Common myeloid progenitor, CD34-positive (primary cell): ENCODE measurements at regions of chr10 and their contacts with region 1.

Region 1: DNA sequence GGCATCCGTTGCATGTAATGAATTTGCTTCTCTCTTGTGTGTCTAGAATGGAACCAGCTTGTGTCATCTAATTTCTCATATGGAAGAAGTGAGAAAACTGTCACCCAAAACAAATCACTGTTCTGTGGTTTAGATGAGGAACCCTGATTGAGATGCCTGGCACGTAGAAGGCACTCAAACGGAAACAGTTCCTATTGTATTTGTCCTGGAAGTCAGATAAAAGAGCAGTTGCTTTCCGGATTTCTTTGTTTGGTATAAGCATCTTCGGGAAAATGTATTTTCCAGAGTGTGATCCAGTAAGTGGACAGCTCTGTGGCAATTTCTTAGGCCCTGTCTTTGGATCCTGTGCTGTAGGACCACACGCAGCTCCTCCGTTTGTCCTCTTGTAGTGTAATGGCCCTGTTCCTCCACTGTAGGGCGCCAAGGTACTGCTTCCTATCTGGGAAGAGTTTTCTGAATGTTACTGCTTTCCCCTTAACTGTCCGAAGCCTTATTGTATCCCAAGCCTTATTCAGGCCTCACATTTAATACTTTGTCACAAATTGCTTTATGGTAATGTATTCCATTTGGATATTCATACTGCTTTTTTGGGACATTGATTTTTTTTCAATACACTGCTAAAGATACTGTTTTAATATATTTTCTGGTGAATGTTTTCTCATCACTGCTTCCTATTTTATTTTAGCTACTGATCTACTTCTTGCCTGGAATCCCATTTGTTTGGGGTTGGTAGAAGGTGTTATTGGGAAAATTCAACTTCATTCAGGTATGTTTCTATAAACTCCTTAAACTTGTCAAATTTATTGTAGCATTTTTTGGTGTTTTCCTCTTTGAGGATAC is 24.8 kb downstream of the INPP5F start:
- DNase-seq: peak; percentile 68 to 80 (median 76)
- H3K4me3 ChIP-seq: no peak overlapping the region
- H3K27ac ChIP-seq: no peak overlapping the region
- H3K4me1 ChIP-seq: peaks cover 0 to 7% (median 1%) of the 10 kb centered on the region in 4 experiments
- H3K27me3 ChIP-seq: no peaks in the 10 kb centered on the region

Region 2: GRCh38 chr10:119737827-119738226 is 12.8 kb before region 1 on chr10:
- CTCF ChIA-PET with region 1: interaction called, 25 read pairs
- POLR2A ChIA-PET with region 1: no interaction called
- DNase-seq: peak; percentile 34 to 75 (median 64)
- H3K4me3 ChIP-seq: peak overlapping the region in 1 of 7 experiments; percentile 33
- H3K27ac ChIP-seq: no peak overlapping the region
- H3K4me1 ChIP-seq: peaks cover 0 to 23% (median 8%) of the 10 kb centered on the region in 4 experiments
- H3K27me3 ChIP-seq: no peaks in the 10 kb centered on the region

Region 3: GRCh38 chr10:119769886-119770285 is 19.3 kb after region 1 on chr10:
- CTCF ChIA-PET with region 1: interaction called, 32 read pairs
- POLR2A ChIA-PET with region 1: no interaction called
- DNase-seq: no peak
- H3K4me3 ChIP-seq: no peak overlapping the region
- H3K27ac ChIP-seq: no peak overlapping the region
- H3K4me1 ChIP-seq: peaks cover 7 to 31% (median 19%) of the 10 kb centered on the region in 4 experiments
- H3K27me3 ChIP-seq: no peaks in the 10 kb centered on the region

Region 4: DNA sequence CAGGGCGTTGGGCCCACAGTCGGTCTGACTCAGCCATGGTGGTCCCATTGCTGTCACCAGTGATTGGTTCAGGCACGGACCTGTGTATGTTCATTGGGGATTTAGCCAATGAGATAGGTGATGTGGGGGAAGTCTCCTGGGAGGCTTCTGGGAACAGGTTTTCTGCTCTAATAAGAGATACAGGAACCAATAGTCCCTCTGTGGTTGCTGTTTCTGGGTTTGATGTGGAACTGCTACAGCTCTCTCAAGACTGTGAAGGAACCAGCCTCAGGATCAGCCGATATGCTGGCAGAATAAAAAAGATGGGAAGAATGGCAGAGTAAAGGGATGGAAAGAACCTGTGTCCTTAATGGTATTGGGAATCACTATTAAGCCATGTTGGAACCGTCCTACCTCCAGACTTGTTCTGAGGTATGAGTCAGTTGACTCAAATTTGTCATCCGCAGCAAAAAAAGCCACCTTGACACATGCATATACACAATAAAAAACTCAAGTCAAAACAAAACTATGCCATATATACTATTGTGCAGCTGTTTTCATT is 51.5 kb after region 1 on chr10:
- CTCF ChIA-PET with region 1: no interaction called
- POLR2A ChIA-PET with region 1: no interaction called
- DNase-seq: no peak
- H3K4me3 ChIP-seq: no peak overlapping the region
- H3K27ac ChIP-seq: no peak overlapping the region
- H3K4me1 ChIP-seq: peaks cover 0 to 19% (median 3%) of the 10 kb centered on the region in 4 experiments
- H3K27me3 ChIP-seq: no peaks in the 10 kb centered on the region

Region 5: GRCh38 chr10:119849031-119849789 is 98.6 kb after region 1 on chr10:
- CTCF ChIA-PET with region 1: interaction called, 12 read pairs
- POLR2A ChIA-PET with region 1: no interaction called
- DNase-seq: no peak
- H3K4me3 ChIP-seq: no peak overlapping the region
- H3K27ac ChIP-seq: no peak overlapping the region
- H3K4me1 ChIP-seq: peaks cover 0 to 16% (median 2%) of the 10 kb centered on the region in 4 experiments
- H3K27me3 ChIP-seq: no peaks in the 10 kb centered on the region